ENCODE measurements at regions of chr2 and their contacts with region 1.

Region 1: DNA sequence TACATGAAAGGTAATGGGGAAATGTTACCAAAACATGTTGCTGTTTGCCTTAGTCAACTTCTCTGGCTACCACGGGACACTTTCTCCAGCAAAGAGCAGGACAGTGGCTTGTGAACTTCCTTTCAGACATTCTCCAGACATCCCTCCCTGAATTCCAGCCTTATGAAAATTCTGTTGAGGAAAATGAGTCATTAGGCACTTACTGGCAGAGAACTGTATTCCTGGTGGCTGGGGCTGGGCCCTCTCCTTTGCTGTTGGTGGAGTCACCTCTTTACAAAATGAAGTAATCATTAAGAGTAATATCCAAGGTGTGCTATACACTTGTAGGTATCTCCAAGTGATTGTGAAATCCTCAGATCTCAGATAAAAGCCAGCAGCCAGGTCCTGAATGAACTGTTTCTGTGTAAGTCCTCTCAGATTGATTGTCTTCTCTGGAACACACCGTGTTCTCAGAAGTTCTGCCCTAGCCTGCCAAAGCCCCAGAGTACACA is 1.3 kb upstream of the FAP start:
- DNase-seq: peak; percentile 91
- H3K4me3 ChIP-seq: no peak overlapping the region
- H3K27ac ChIP-seq: peak overlapping the region; percentile 81
- H3K4me1 ChIP-seq: peaks cover 19% of the 10 kb centered on the region
- H3K27me3 ChIP-seq: no peaks in the 10 kb centered on the region
- CTCF ChIP-seq: no peak
- POLR2A ChIP-seq: no peak

Region 2: DNA sequence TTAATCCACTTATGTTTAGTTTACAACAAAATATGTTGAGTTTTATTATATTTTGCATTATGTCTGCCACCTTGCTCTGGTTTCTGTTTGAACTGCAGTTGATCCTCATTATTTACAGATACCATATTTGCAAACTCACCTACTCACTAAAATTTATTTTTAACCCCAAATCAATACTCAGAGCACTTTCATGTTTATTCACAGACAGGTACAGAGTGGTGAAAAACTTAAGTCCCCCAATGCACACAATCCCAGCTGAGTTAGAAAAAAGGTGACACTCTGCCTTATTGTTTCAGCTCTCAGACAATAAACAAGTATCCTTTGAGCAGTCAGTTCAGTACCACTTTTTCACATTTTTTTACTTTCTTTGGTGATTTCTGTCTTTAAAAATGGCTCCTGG is 106.3 kb before region 1 on chr2:
- CTCF ChIA-PET with region 1: no interaction called
- POLR2A ChIA-PET with region 1: no interaction called
- dilution Hi-C with region 1: no loop called
- intact Hi-C with region 1: no loop called
- DNase-seq: no peak
- H3K4me3 ChIP-seq: no peak overlapping the region
- H3K27ac ChIP-seq: no peak overlapping the region
- H3K4me1 ChIP-seq: no peaks in the 10 kb centered on the region
- H3K27me3 ChIP-seq: peaks cover 0 to 3% of the 10 kb centered on the region in 2 experiments
- CTCF ChIP-seq: no peak
- POLR2A ChIP-seq: no peak

Region 3: DNA sequence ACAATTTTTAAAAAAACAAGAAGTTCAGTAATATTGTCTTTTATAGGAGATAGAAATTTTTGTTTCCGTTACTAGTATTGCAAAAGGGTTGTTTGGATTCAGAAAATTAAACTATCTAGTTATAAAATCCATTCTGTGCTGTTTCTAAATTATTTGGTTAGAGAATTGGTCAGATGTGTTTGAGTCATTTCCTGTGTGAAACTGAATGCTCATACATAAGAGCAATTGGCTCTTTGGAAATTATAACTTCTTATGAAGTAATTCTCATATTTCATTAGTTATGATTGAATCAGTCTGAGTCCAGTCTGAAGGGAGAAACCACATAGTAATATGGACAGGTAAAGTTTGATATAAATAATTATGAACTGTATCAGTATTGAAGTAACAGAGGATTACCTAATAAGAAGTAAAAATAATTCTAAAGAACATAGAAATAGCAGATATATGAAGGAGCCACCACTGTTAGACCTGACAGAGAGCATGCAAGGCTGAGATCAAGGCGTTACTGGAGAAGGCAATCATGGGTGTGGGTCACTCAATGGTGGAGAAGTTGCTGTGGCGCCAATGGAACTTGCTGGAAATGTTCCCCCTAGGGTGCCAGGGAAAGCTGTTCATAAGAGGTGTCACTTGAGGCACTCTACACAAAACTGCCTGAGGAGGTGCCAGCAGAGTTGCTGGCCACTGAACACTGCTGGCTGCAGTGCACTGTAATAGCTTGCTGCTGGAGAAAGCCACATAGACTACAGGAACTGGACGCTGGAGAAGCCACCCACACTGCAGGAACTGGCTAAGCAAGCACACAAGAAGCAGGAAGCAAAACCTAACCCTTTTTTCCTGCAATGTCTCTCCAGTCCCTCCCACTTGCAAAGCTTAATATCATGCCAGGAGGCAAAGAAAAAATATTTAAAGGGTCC is 16.7 kb after region 1 on chr2:
- CTCF ChIA-PET with region 1: interaction called, 5 read pairs
- POLR2A ChIA-PET with region 1: no interaction called
- dilution Hi-C with region 1: no loop called
- intact Hi-C with region 1: loop called (anchors 1 kb)
- DNase-seq: peak; percentile 57
- H3K4me3 ChIP-seq: no peak overlapping the region
- H3K27ac ChIP-seq: no peak overlapping the region
- H3K4me1 ChIP-seq: peaks cover 14% of the 10 kb centered on the region
- H3K27me3 ChIP-seq: no peaks in the 10 kb centered on the region
- CTCF ChIP-seq: no peak
- POLR2A ChIP-seq: no peak